ENCODE measurements at regions of chr3 and their contacts with region 1.

Region 1: DNA sequence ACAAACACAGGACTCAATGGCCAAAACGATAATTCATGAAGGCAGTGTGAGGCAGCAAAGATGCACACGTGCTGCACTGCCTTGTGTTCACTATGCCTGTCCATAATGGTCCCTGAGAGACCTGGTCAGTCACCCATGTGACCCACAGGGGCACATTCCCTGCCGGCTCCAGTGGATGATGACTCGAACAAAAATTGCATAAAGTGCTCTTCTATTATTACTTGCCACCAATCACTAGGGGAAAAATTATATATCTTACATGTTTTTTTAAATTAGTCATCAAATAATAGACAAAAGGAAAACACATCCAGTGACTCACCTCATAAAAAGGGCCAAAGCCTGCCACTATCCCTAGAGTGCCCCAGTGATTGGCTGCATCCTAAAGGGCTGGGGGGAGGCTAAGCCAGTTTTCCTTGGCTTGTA is 47.5 kb downstream of the UBP1 start:
- DNase-seq: peak; percentile 93
- ATAC-seq: peak; percentile 96
- H3K4me3 ChIP-seq: no peak overlapping the region
- H3K27ac ChIP-seq: peak overlapping the region; percentile 52; the same call in 1 of the 2 replicates
- H3K4me1 ChIP-seq: peaks cover 10% of the 10 kb centered on the region
- H3K27me3 ChIP-seq: no peaks in the 10 kb centered on the region
- CTCF ChIP-seq: no peak
- POLR2A ChIP-seq: no peak
- RAD21 ChIP-seq: no peak

Region 2: GRCh38 chr3:33237439-33237838 is 155.3 kb before region 1 on chr3:
- CTCF ChIA-PET with region 1: no interaction called
- POLR2A ChIA-PET with region 1: no interaction called
- dilution Hi-C with region 1: no loop called
- in situ Hi-C with region 1: no loop called
- intact Hi-C with region 1: no loop called
- DNase-seq: no peak
- ATAC-seq: no peak
- H3K4me3 ChIP-seq: no peak overlapping the region
- H3K27ac ChIP-seq: no peak overlapping the region
- H3K4me1 ChIP-seq: no peaks in the 10 kb centered on the region
- H3K27me3 ChIP-seq: peaks cover 7% of the 10 kb centered on the region
- CTCF ChIP-seq: no peak
- POLR2A ChIP-seq: no peak
- RAD21 ChIP-seq: no peak

Region 3: GRCh38 chr3:33269385-33269784 is 123.3 kb before region 1 on chr3:
- CTCF ChIA-PET with region 1: no interaction called
- POLR2A ChIA-PET with region 1: no interaction called
- dilution Hi-C with region 1: no loop called
- in situ Hi-C with region 1: no loop called
- intact Hi-C with region 1: no loop called
- DNase-seq: no peak
- ATAC-seq: no peak
- H3K4me3 ChIP-seq: no peak overlapping the region
- H3K27ac ChIP-seq: no peak overlapping the region
- H3K4me1 ChIP-seq: no peaks in the 10 kb centered on the region
- H3K27me3 ChIP-seq: no peaks in the 10 kb centered on the region
- CTCF ChIP-seq: no peak
- POLR2A ChIP-seq: no peak
- RAD21 ChIP-seq: no peak

Region 4: DNA sequence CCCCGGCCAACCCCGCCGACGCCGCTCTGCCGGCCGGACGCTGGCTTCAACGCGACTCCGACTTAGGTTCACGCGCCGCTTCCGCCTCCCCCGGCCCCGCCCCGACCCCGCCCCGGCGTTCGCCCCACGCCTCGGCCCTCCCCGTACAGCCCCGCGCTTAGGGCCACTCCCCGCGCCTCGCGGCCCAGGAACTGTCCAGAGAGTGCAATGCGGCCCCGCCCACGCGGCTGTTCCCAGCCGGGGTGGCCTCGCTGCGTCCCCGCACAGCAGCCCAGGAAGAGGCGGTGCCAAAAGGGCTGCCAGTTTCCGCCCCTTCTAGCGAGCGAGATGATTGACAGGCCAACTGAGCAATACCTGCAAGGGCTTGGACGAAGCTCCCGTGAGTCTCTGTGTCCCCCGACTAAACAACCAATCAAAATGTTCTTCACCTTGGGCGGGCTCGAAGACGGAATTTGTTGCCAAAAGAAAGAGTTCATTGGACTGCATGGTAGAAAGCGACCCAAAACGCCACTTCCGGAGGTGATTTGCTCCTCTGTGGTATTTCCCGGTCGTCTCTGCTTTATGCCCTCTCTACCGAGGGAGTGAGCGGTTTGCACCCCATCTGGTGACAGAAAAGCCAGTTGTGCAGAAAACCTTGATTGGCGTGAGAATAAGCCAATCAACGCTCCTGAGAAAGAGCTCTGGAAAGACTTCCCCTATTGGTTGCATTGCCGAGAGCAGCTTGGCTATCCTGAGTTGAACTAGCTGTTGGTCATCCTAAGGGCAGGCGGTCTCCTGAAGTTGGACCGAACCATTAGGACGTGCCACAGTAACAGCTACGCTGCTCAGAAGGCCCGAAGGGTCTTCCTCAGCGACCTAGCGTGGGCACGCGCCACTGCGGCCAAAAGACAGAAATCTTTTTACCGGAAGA is 47.9 kb after region 1 on chr3 and contains the start of gene UBP1:
- CTCF ChIA-PET with region 1: no interaction called
- POLR2A ChIA-PET with region 1: no interaction called
- dilution Hi-C with region 1: no loop called
- in situ Hi-C with region 1: no loop called
- intact Hi-C with region 1: loop called (anchors 5 kb)
- DNase-seq: peak; percentile 100
- ATAC-seq: peak; percentile 91
- H3K4me3 ChIP-seq: peak within 1 kb of the TSS; percentile 73
- H3K27ac ChIP-seq: peak within 1 kb of the TSS; percentile 92
- H3K4me1 ChIP-seq: peaks cover 2% of the 10 kb centered on the region
- H3K27me3 ChIP-seq: no peaks in the 10 kb centered on the region
- CTCF ChIP-seq: 0 out of 2 replicates have a peak, but pooled peaks have one; percentile 9
- POLR2A ChIP-seq: peak; percentile 91
- RAD21 ChIP-seq: no peak
- total RNA-seq, gene UBP1: 56.3 and 68.6 TPM in 2 replicates